Activated CD4-positive, alpha-beta memory T cell treated with anti-CD3 and anti-CD28 coated beads for 36 hours (primary cell): ENCODE measurements at regions of chr6 and their contacts with region 1.

Region 1: GRCh38 chr6:127266178-127266891 is at the start of gene RNF146:
- DNase-seq: peak; percentile 77
- H3K4me3 Mint-ChIP-seq: peak within 1 kb of the TSS; percentile 93
- H3K27ac Mint-ChIP-seq: peak within 1 kb of the TSS; percentile 97
- H3K4me1 Mint-ChIP-seq: peaks cover 32% of the 10 kb centered on the region
- H3K27me3 Mint-ChIP-seq: peaks cover 1% of the 10 kb centered on the region
- total RNA-seq, gene RNF146: 15.4 to 20.3 TPM

Region 2: GRCh38 chr6:125986300-125987025 is 1279.9 kb before region 1 on chr6 and contains the start of gene TRMT11:
- CTCF ChIA-PET with region 1: no interaction called
- POLR2A ChIA-PET with region 1: interaction called, 3 read pairs
- intact Hi-C with region 1: loop called (anchors 5 kb)
- DNase-seq: peak; percentile 90
- H3K4me3 Mint-ChIP-seq: peak within 1 kb of the TSS; percentile 9
- H3K27ac Mint-ChIP-seq: no peak within 1 kb of the TSS
- H3K4me1 Mint-ChIP-seq: peaks cover 20% of the 10 kb centered on the region
- H3K27me3 Mint-ChIP-seq: no peaks in the 10 kb centered on the region
- total RNA-seq, gene TRMT11: 42.8 to 46.9 TPM

Region 3: DNA sequence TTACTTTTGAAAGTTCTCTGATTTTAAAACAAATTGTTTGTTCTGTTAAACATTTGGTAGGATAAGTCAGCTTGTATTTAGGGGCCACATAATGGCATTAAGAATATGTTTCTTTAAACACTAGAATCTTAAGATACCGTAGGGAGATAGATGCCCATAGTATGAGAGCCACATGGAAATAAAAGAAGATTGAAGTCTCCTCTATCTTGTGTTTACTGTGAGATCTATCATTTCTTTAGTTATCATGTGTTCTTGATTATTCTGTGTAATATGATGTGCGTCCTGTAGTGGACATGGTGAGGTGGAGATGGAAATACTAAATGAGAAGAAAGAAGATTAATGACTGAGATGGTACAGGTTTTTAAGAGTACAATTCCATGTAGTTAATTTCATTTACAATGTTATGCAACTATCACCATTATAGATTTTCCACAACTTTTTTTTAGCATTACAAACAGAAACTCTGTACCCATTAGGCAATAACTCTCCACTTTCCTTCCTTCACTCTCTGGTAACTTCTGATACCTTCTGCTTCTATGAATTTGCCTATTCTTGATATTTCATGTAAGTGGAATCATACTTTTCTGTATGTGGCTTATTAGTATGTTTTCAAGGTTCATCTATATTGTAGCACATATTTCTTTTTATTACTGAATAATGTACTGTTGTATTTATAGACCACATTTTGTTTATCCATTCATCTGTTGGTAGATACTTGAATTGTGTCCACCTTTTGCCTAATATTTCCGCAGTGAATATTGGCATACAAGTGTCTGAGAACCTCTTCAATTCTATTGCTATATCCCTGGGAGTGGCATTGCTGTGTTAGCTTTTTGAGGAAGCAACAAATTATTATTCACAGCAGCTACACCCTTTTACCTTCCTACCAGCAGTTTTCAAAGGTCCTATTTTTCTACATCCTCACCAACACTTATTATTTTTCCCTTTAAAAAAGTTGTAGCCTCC is 11.8 kb after region 1 on chr6:
- CTCF ChIA-PET with region 1: interaction called, 18 read pairs
- POLR2A ChIA-PET with region 1: no interaction called
- intact Hi-C with region 1: no loop called
- DNase-seq: no peak
- H3K4me3 Mint-ChIP-seq: no peak overlapping the region
- H3K27ac Mint-ChIP-seq: no peak overlapping the region
- H3K4me1 Mint-ChIP-seq: peaks cover 9% of the 10 kb centered on the region
- H3K27me3 Mint-ChIP-seq: no peaks in the 10 kb centered on the region

Region 4: GRCh38 chr6:127342946-127343808 is 76.8 kb after region 1 on chr6 and contains the start of gene ECHDC1:
- CTCF ChIA-PET with region 1: interaction called, 8 read pairs
- POLR2A ChIA-PET with region 1: interaction called, 9 read pairs
- intact Hi-C with region 1: loop called (anchors 1 kb)
- DNase-seq: peak; percentile 83
- H3K4me3 Mint-ChIP-seq: no peak within 1 kb of the TSS
- H3K27ac Mint-ChIP-seq: no peak within 1 kb of the TSS
- H3K4me1 Mint-ChIP-seq: peaks cover 7% of the 10 kb centered on the region
- H3K27me3 Mint-ChIP-seq: no peaks in the 10 kb centered on the region
- total RNA-seq, gene ECHDC1: 42.9 to 43.7 TPM

Region 5: GRCh38 chr6:127484212-127484858 is 218.0 kb after region 1 on chr6:
- CTCF ChIA-PET with region 1: interaction called, 5 read pairs
- POLR2A ChIA-PET with region 1: no interaction called
- intact Hi-C with region 1: loop called (anchors 1 kb)
- DNase-seq: no peak
- H3K4me3 Mint-ChIP-seq: no peak overlapping the region
- H3K27ac Mint-ChIP-seq: peak overlapping the region; percentile 68
- H3K4me1 Mint-ChIP-seq: peaks cover 28% of the 10 kb centered on the region
- H3K27me3 Mint-ChIP-seq: no peaks in the 10 kb centered on the region